ENCODE measurements at regions of chr2 and their contacts with region 1.

Region 1: GRCh38 chr2:66434679-66435548 is at the start of gene MEIS1:
- DNase-seq: peak; percentile 93 to 96
- H3K4me3 ChIP-seq: peak within 1 kb of the TSS; percentile 75
- H3K4me3 Mint-ChIP-seq: peak within 1 kb of the TSS; percentile 81
- H3K27ac Mint-ChIP-seq: peak within 1 kb of the TSS; percentile 82
- H3K4me1 ChIP-seq: peaks cover 16% of the 10 kb centered on the region
- H3K4me1 Mint-ChIP-seq: peaks cover 20% of the 10 kb centered on the region
- H3K27me3 ChIP-seq: no peaks in the 10 kb centered on the region
- H3K27me3 Mint-ChIP-seq: no peaks in the 10 kb centered on the region
- CTCF ChIP-seq: peak in 1 of 2 experiments; percentile 7
- total RNA-seq, gene MEIS1: 7.4 and 10.5 TPM in 2 replicates

Region 2: GRCh38 chr2:66495788-66496640 is 61.1 kb after region 1 on chr2:
- CTCF ChIA-PET with region 1: no interaction called
- POLR2A ChIA-PET with region 1: no interaction called
- intact Hi-C with region 1: loop called (anchors 2 kb)
- DNase-seq: peak in 1 of 2 experiments; percentile 43
- H3K4me3 ChIP-seq: no peak overlapping the region
- H3K4me3 Mint-ChIP-seq: no peak overlapping the region
- H3K27ac Mint-ChIP-seq: peak overlapping the region; percentile 65
- H3K4me1 ChIP-seq: no peaks in the 10 kb centered on the region
- H3K4me1 Mint-ChIP-seq: peaks cover 11% of the 10 kb centered on the region
- H3K27me3 ChIP-seq: no peaks in the 10 kb centered on the region
- H3K27me3 Mint-ChIP-seq: no peaks in the 10 kb centered on the region
- CTCF ChIP-seq: peak in 1 of 2 experiments; percentile 16

Region 3: GRCh38 chr2:66566726-66567399 is 131.9 kb after region 1 on chr2:
- CTCF ChIA-PET with region 1: no interaction called
- POLR2A ChIA-PET with region 1: interaction called, 4 read pairs
- intact Hi-C with region 1: loop called (anchors 2 kb)
- DNase-seq: no peak
- H3K4me3 ChIP-seq: no peak overlapping the region
- H3K4me3 Mint-ChIP-seq: no peak overlapping the region
- H3K27ac Mint-ChIP-seq: no peak overlapping the region
- H3K4me1 ChIP-seq: peaks cover 40% of the 10 kb centered on the region
- H3K4me1 Mint-ChIP-seq: peaks cover 46% of the 10 kb centered on the region
- H3K27me3 ChIP-seq: no peaks in the 10 kb centered on the region
- H3K27me3 Mint-ChIP-seq: no peaks in the 10 kb centered on the region
- CTCF ChIP-seq: no peak

Region 4: GRCh38 chr2:66832646-66833435 is 397.9 kb after region 1 on chr2:
- CTCF ChIA-PET with region 1: no interaction called
- POLR2A ChIA-PET with region 1: interaction called, 11 read pairs
- intact Hi-C with region 1: no loop called
- DNase-seq: no peak
- H3K4me3 ChIP-seq: no peak overlapping the region
- H3K4me3 Mint-ChIP-seq: no peak overlapping the region
- H3K27ac Mint-ChIP-seq: no peak overlapping the region
- H3K4me1 ChIP-seq: no peaks in the 10 kb centered on the region
- H3K4me1 Mint-ChIP-seq: no peaks in the 10 kb centered on the region
- H3K27me3 ChIP-seq: no peaks in the 10 kb centered on the region; the same call in 1 of the 2 replicates
- H3K27me3 Mint-ChIP-seq: peaks cover 5% of the 10 kb centered on the region
- CTCF ChIP-seq: no peak

Region 5: DNA sequence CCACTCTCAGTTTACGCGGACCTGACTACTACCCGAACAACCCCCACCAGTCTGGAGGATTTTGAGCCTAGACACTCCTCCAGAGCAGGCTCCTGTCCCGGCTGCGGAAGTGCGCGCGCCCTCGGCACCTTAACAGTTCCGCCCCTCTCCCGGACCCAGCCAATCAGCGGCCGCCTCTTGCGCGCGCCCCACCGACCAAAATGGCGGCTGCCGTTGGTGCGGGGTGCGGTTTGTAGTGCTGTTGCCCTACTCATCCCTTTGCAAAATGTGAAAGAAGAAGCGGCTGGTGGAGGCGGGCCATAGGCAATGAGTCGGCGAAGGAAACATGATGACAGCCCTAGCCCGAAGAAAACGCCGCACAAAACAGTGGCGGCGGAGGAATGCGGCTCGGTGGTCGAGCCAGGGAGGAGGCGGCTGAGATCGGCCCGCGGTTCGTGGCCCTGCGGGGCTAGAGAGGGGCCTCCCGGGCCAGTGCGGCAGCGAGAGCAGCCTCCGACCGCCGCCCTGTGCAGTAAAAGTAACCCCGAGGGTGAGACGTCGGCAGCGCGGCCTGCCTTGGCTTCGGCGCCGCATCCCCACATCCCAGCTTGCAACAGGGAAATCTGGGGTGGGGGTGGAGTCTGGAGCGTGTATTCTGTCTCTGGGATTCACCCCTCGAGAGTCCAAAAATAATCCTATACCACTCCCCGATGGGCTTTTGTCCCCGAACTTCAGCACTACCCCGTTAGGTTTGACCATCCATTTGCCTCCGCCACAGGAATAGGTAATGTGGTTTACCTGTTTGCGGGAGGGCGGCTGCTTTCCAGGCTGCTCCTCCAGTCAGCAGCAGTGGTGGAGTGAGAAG is 962.5 kb after region 1 on chr2 and contains the start of gene ETAA1:
- CTCF ChIA-PET with region 1: no interaction called
- POLR2A ChIA-PET with region 1: no interaction called
- intact Hi-C with region 1: loop called (anchors 10 kb)
- DNase-seq: peak; percentile 93 to 94
- H3K4me3 ChIP-seq: peak within 1 kb of the TSS; percentile 92
- H3K4me3 Mint-ChIP-seq: peak within 1 kb of the TSS; percentile 94
- H3K27ac Mint-ChIP-seq: peak within 1 kb of the TSS; percentile 95
- H3K4me1 ChIP-seq: peaks cover 28% of the 10 kb centered on the region
- H3K4me1 Mint-ChIP-seq: peaks cover 12% of the 10 kb centered on the region
- H3K27me3 ChIP-seq: no peaks in the 10 kb centered on the region
- H3K27me3 Mint-ChIP-seq: no peaks in the 10 kb centered on the region
- CTCF ChIP-seq: no peak
- total RNA-seq, gene ETAA1: 11.4 and 12.4 TPM in 2 replicates

Measured in Caco-2 (cell line).